Activated CD4-positive, alpha-beta memory T cell treated with anti-CD3 and anti-CD28 coated beads, Interleukin-2, amount 10 ng/mL, durations not matched to agents 7 days and 5 days (primary cell): ENCODE measurements at regions of chr19 and their contacts with region 1.

Region 1: DNA sequence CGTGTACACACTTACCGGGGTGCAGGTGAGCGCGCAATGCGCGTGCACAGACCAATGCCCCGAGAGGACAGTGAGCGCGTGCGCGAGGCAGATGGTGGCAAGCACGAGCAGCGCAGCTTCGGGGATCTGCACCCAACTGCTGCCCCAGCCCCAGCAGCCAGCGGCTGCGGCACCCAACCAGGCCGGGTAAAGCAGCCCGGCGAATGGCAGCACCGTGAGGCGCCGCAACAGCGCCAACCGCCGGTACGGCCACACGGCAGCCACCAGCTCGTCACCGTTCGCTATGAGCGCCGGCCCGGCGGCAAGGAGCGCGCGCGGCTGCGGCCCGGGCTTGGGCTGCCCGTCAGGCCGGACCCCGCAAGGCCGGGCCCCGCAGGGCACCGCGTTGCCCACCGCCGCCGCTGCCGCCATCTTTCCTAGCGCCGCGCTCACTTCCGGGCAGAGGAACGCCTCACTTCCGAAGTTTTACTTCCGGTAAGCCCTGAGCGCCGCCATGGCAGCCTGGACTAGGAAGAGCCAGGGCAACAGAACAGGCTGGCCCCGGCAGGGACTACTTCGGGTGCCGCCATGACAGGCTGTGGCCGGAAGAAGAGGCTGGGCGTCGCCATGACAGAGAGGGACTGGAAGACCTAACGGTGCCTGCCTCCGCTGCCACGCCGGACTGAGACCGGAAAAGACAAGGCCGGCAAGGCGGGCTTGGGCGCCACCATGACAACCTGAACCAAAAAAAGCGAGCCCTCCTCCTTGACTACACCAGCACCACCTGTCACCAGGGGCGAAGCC is at the start of gene ATP13A1:
- DNase-seq: peak; percentile 95
- H3K4me3 Mint-ChIP-seq: peak within 1 kb of the TSS; percentile 81
- H3K27ac Mint-ChIP-seq: peak within 1 kb of the TSS; percentile 98
- H3K4me1 Mint-ChIP-seq: peaks cover 40% of the 10 kb centered on the region
- H3K27me3 Mint-ChIP-seq: no peaks in the 10 kb centered on the region
- total RNA-seq, gene ATP13A1: 102 to 107 TPM

Region 2: DNA sequence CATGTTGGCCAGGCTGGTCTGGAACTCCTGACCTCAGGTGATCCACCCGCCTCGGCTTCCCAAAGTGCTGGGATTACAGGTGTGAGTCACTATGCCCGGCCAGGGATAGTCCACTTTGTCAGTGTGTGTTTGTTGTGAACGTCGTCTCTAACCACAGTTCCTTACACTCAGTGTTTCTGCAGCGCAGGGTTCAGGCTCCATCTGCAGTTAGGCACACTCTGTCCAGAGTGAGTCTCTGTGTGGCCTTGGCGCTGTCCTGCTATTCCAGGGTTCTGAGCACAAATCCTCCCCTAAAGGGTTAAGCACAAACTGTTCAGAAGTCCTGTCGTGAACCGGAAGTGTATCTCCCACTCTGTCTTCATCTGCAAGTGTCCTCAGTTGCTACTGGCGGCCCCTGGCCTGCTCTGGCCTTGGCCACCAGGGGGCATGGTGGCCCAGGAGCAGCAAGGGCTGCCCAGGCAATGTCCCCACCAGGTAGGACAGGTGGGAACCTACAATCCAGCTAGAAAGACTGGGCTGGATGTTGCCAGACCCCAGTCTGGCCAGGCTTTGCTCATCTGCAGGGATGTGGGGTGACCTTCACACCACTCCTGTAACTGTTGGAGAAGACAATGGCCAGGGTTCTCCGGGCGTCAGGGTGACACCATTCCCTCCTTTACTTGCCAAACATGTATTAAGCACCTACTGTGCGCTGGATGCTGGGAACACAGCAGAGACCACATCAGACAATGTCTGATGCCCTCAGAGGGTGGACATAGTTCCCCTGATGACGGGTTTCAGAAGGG is 296.6 kb before region 1 on chr19:
- CTCF ChIA-PET with region 1: no interaction called
- POLR2A ChIA-PET with region 1: no interaction called
- DNase-seq: peak; percentile 81
- H3K4me3 Mint-ChIP-seq: peak overlapping the region; percentile 17
- H3K27ac Mint-ChIP-seq: peak overlapping the region; percentile 61
- H3K4me1 Mint-ChIP-seq: peaks cover 19% of the 10 kb centered on the region
- H3K27me3 Mint-ChIP-seq: no peaks in the 10 kb centered on the region

Region 3: DNA sequence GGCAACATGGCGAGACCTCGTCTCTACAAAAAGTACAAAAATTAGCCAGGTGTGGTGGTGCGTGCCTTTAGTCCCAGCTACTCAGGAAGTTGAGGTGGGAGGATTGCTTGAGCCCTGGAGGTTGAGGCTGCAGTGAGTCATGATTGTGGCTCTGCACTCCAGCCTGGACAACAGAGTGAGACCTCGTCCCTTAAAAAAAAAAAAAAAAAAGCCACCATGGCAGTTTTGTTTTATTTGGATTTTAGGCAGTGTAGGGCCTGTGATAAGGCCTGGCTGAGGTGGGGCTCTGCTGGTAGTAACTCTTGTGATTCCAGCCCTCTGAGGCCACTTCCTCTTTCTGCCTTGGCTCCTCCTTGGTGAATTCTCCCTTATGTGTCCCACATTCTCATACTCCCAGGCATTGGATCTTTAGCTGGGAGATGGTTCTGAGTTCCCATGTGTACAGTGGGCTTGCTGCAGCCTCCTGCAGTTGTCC is 218.7 kb before region 1 on chr19:
- CTCF ChIA-PET with region 1: no interaction called
- POLR2A ChIA-PET with region 1: no interaction called
- DNase-seq: peak; percentile 62
- H3K4me3 Mint-ChIP-seq: peak overlapping the region; percentile 40
- H3K27ac Mint-ChIP-seq: peak overlapping the region; percentile 89
- H3K4me1 Mint-ChIP-seq: peaks cover 65% of the 10 kb centered on the region
- H3K27me3 Mint-ChIP-seq: no peaks in the 10 kb centered on the region

Region 4: GRCh38 chr19:19531951-19532805 is 131.3 kb before region 1 on chr19:
- CTCF ChIA-PET with region 1: interaction called, 9 read pairs
- POLR2A ChIA-PET with region 1: interaction called, 19 read pairs
- DNase-seq: peak; percentile 86
- H3K4me3 Mint-ChIP-seq: no peak overlapping the region
- H3K27ac Mint-ChIP-seq: no peak overlapping the region
- H3K4me1 Mint-ChIP-seq: peaks cover 9% of the 10 kb centered on the region
- H3K27me3 Mint-ChIP-seq: peaks cover 3% of the 10 kb centered on the region

Region 5: GRCh38 chr19:19606021-19606420 is 57.4 kb before region 1 on chr19:
- CTCF ChIA-PET with region 1: interaction called, 3 read pairs
- POLR2A ChIA-PET with region 1: interaction called, 40 read pairs
- DNase-seq: peak; percentile 65
- H3K4me3 Mint-ChIP-seq: peak overlapping the region; percentile 41
- H3K27ac Mint-ChIP-seq: peak overlapping the region; percentile 98
- H3K4me1 Mint-ChIP-seq: peaks cover 76% of the 10 kb centered on the region
- H3K27me3 Mint-ChIP-seq: no peaks in the 10 kb centered on the region

Region 6: DNA sequence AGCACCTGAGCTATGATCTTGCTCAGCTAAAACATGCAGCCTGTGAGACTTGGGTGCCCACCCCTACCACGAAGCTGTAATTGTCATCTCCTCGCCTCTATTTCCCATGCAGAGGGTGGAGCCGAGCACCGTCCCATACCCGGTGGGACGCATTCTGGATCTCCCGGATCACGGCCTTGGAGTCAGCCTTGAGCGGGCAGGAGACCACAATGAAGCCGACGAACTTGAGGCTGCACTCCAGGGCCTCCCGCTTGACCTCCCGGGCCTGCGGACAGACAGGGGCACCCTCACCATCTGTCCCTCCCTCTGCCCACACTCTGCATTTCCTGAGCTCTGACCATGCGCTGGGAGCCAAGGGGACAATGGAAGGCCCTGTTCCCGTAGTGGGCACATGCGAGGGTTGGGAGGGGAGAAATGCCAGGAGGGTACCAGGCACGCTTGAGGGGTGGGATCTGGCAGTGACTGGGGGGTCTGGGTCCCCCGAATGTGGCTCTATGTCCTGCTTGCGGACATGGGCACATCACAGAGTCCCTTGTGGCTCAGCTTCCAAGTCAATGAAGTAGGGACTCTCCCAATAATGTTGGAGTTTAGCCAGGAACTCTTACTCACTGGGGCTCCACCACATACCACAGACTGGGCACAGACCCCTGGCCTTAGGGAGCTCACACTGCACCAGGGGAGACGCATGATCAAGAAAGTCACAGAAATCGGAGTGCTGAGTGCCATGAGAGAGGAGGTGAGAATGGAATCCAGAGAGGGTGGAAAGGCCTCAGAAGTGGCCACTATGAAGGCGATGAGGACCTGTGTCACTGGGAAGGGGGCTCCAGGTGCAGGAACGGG is 10.8 kb before region 1 on chr19:
- CTCF ChIA-PET with region 1: no interaction called
- POLR2A ChIA-PET with region 1: interaction called, 36 read pairs
- DNase-seq: no peak
- H3K4me3 Mint-ChIP-seq: no peak overlapping the region
- H3K27ac Mint-ChIP-seq: peak overlapping the region; percentile 7
- H3K4me1 Mint-ChIP-seq: peaks cover 2% of the 10 kb centered on the region
- H3K27me3 Mint-ChIP-seq: no peaks in the 10 kb centered on the region

Region 7: GRCh38 chr19:19732579-19733501 is 69.4 kb after region 1 on chr19 and contains the start of gene ZNF14:
- CTCF ChIA-PET with region 1: no interaction called
- POLR2A ChIA-PET with region 1: interaction called, 36 read pairs
- DNase-seq: peak; percentile 92
- H3K4me3 Mint-ChIP-seq: peak within 1 kb of the TSS; percentile 100
- H3K27ac Mint-ChIP-seq: peak within 1 kb of the TSS; percentile 89
- H3K4me1 Mint-ChIP-seq: peaks cover 20% of the 10 kb centered on the region
- H3K27me3 Mint-ChIP-seq: no peaks in the 10 kb centered on the region
- total RNA-seq, gene ZNF14: 8.0 to 8.4 TPM

Region 8: GRCh38 chr19:19865739-19866481 is 202.5 kb after region 1 on chr19 and contains the start of gene ZNF253:
- CTCF ChIA-PET with region 1: no interaction called
- POLR2A ChIA-PET with region 1: interaction called, 66 read pairs
- DNase-seq: peak; percentile 97
- H3K4me3 Mint-ChIP-seq: peak within 1 kb of the TSS; percentile 100
- H3K27ac Mint-ChIP-seq: peak within 1 kb of the TSS; percentile 100
- H3K4me1 Mint-ChIP-seq: peaks cover 22% of the 10 kb centered on the region
- H3K27me3 Mint-ChIP-seq: no peaks in the 10 kb centered on the region
- total RNA-seq, gene ZNF253: 12.9 to 14.7 TPM

Region 9: GRCh38 chr19:20237761-20238623 is 574.5 kb after region 1 on chr19:
- CTCF ChIA-PET with region 1: no interaction called
- POLR2A ChIA-PET with region 1: interaction called, 11 read pairs
- DNase-seq: peak; percentile 88
- H3K4me3 Mint-ChIP-seq: peak overlapping the region; percentile 87
- H3K27ac Mint-ChIP-seq: peak overlapping the region; percentile 82
- H3K4me1 Mint-ChIP-seq: peaks cover 10% of the 10 kb centered on the region
- H3K27me3 Mint-ChIP-seq: no peaks in the 10 kb centered on the region